ENCODE measurements at regions of chr18 and their contacts with region 1.

Region 1: DNA sequence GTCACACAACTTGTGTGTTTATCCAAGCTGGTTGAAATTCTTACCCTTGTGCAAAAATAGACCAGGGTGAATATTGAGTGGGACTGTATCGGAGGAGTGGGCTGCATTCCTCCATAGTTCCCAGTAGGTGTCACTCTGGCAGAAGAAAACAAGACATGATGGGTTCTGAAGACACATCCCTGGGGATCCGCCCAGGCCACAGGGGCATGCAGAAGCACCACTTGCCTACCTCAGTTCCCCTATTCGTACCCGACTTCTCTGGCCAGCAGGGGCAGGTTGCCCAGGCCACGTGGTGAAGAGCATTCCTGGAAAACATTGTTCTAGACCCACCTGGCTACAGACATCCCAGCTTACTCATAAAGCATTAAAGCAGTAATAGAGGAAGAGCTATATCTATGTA is 168.2 kb downstream of the FAM210A start:
- DNase-seq: peak; percentile 58
- ATAC-seq: peak; percentile 29
- H3K4me3 Mint-ChIP-seq: no peak overlapping the region
- H3K27ac Mint-ChIP-seq: no peak overlapping the region
- H3K4me1 Mint-ChIP-seq: peaks cover 41% of the 10 kb centered on the region
- H3K27me3 Mint-ChIP-seq: no peaks in the 10 kb centered on the region

Region 2: DNA sequence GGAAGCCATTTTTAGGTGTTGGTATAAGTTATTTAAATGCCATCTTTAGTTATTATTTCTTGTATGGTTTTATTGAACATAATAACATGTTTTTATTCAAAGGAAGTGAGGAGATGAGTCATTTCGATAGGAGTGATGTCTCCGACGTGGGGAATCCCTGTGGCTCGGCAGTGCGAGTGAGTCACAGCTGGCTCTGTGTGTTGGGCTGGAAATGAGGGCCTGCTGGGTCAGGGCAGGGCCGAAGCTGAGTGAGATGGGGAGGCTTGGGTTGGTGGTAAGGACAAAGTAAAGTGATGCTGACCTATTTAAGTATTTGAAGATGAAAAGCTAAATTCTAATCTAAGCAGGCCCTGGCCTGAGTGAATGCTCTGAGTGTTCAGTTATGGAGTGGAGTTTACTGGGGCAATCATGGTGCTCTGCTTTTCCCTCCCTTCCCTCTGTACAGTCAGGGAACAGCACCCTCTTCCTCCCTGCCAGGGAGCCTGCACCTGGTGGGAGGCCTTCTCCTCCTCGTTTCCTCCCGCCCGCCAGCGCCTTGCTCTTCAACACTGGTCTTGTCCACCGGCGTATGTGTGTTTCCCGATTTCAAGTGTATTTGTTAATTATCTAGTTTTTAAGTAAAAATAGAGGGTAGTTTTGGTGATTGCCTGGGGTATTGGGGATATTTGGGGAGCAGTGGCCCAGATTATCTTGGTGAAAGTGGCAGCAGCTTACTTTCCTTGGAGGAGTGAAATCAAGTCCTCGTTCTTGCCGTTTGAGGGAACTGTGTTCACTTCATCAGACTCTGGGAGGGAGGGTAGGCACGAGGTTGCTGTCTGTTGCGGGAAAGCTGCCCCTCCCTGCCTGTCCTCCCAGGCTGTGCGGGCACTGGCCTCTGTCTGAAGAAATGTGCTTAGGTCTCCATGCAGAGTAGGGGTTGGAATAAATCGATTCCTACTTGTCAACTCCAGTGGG is 182.5 kb before region 1 on chr18:
- CTCF ChIA-PET with region 1: interaction called, 3 read pairs
- POLR2A ChIA-PET with region 1: no interaction called
- intact Hi-C with region 1: loop called in 1 of 2 experiments (anchors 1 kb)
- DNase-seq: peak; percentile 91
- ATAC-seq: peak; percentile 73
- H3K4me3 Mint-ChIP-seq: peak overlapping the region; percentile 63
- H3K27ac Mint-ChIP-seq: peak overlapping the region; percentile 97
- H3K4me1 Mint-ChIP-seq: peaks cover 84% of the 10 kb centered on the region
- H3K27me3 Mint-ChIP-seq: no peaks in the 10 kb centered on the region

Region 3: DNA sequence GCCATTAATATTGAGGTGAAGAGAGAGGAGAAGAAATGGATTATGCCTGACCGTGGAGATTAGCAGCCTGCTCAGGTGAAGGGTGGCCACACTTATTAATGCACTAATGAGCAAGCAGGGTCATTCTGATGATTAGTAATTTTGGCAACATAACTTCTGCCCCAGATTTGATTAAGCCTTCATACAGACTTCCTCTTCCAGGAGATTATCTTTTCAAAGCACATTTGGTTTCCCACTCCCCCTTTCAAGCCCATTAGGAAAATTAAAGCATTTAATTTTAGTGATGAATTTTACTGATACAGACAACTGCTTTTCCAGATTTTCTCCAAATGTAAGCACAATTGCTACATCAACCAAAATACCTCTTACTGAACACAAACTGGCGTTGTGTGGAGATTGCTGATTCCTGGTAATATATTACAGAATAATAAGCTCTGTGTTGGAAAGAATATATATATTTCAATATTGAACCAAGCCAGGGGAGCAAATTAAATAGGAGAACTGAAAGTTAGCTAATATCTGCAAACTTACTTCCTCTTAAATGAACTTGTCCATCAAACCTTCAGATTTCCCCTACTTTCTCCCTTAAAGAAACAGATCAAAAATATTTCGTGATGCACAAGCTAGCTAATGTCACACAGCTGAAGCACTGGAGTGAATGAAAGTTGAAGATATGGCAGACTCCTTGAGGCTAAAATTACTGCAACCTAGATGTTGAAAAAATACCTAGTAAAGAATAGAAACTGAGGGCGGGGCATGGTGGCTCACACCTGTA is 27.4 kb after region 1 on chr18:
- CTCF ChIA-PET with region 1: interaction called, 4 read pairs
- POLR2A ChIA-PET with region 1: no interaction called
- intact Hi-C with region 1: loop called in 1 of 2 experiments (anchors 2 kb)
- DNase-seq: no peak
- ATAC-seq: no peak
- H3K4me3 Mint-ChIP-seq: no peak overlapping the region
- H3K27ac Mint-ChIP-seq: peak overlapping the region; percentile 35
- H3K4me1 Mint-ChIP-seq: peaks cover 56% of the 10 kb centered on the region
- H3K27me3 Mint-ChIP-seq: no peaks in the 10 kb centered on the region

Region 4: GRCh38 chr18:13597068-13597467 is 38.9 kb after region 1 on chr18:
- CTCF ChIA-PET with region 1: no interaction called
- POLR2A ChIA-PET with region 1: no interaction called
- intact Hi-C with region 1: no loop called
- DNase-seq: no peak
- ATAC-seq: no peak
- H3K4me3 Mint-ChIP-seq: no peak overlapping the region
- H3K27ac Mint-ChIP-seq: no peak overlapping the region
- H3K4me1 Mint-ChIP-seq: peaks cover 7% of the 10 kb centered on the region
- H3K27me3 Mint-ChIP-seq: no peaks in the 10 kb centered on the region

Region 5: GRCh38 chr18:13629841-13630715 is 72.0 kb after region 1 on chr18:
- CTCF ChIA-PET with region 1: interaction called, 18 read pairs
- POLR2A ChIA-PET with region 1: interaction called, 4 read pairs
- intact Hi-C with region 1: loop called (anchors 1 kb)
- DNase-seq: peak; percentile 69
- ATAC-seq: peak; percentile 98
- H3K4me3 Mint-ChIP-seq: no peak overlapping the region
- H3K27ac Mint-ChIP-seq: peak overlapping the region; percentile 52
- H3K4me1 Mint-ChIP-seq: peaks cover 4% of the 10 kb centered on the region
- H3K27me3 Mint-ChIP-seq: no peaks in the 10 kb centered on the region

Region 6: GRCh38 chr18:13800505-13801259 is 242.6 kb after region 1 on chr18:
- CTCF ChIA-PET with region 1: no interaction called
- POLR2A ChIA-PET with region 1: no interaction called
- intact Hi-C with region 1: loop called (anchors 5 to 10 kb)
- DNase-seq: peak; percentile 80
- ATAC-seq: peak; percentile 99
- H3K4me3 Mint-ChIP-seq: peak overlapping the region; percentile 48
- H3K27ac Mint-ChIP-seq: no peak overlapping the region
- H3K4me1 Mint-ChIP-seq: peaks cover 5% of the 10 kb centered on the region
- H3K27me3 Mint-ChIP-seq: peaks cover 51% of the 10 kb centered on the region

Measured in activated CD4-positive, alpha-beta T cell treated with anti-CD3 and anti-CD28 coated beads for 36 hours (primary cell).